ENCODE measurements at regions of chr9 and their contacts with region 1.

Region 1: GRCh38 chr9:92716557-92716956 is 46.6 kb upstream of the IPPK start:
- DNase-seq: no peak
- H3K4me3 ChIP-seq: no peak overlapping the region
- H3K27ac ChIP-seq: peak overlapping the region; percentile 81 to 91 (median 86)
- H3K4me1 ChIP-seq: peaks cover 28 to 68% (median 37%) of the 10 kb centered on the region in 3 donors
- H3K27me3 ChIP-seq: no peaks in the 10 kb centered on the region
- CTCF ChIP-seq: peak; percentile 85 to 98 (median 94)
- POLR2A ChIP-seq: no peak

Region 2: GRCh38 chr9:92790542-92791527 is 74.3 kb after region 1 on chr9:
- intact Hi-C with region 1: loop called (anchors 5 kb)
- DNase-seq: no peak
- H3K4me3 ChIP-seq: peak overlapping the region in 2 of 4 donors; percentile 7 to 15
- H3K27ac ChIP-seq: peak overlapping the region in 3 of 4 donors; percentile 1 to 62 (median 1)
- H3K4me1 ChIP-seq: peaks cover 0 to 8% (median 0%) of the 10 kb centered on the region in 3 donors
- H3K27me3 ChIP-seq: peaks cover 0 to 18% (median 0%) of the 10 kb centered on the region in 4 donors
- CTCF ChIP-seq: peak; percentile 81 to 93 (median 86)
- POLR2A ChIP-seq: no peak